ENCODE measurements at regions of chr13 and their contacts with region 1.

Region 1: GRCh38 chr13:48769107-48769704 is 115.5 kb downstream of the CYSLTR2 start:
- DNase-seq: peak; percentile 13
- H3K4me3 ChIP-seq: no peak overlapping the region
- H3K27ac ChIP-seq: no peak overlapping the region
- H3K4me1 ChIP-seq: peaks cover 0 to 3% (median 0%) of the 10 kb centered on the region in 3 donors
- H3K27me3 ChIP-seq: no peaks in the 10 kb centered on the region
- CTCF ChIP-seq: peak; percentile 92 to 100 (median 100)
- POLR2A ChIP-seq: no peak

Region 2: GRCh38 chr13:48595431-48596429 is 173.5 kb before region 1 on chr13:
- intact Hi-C with region 1: loop called (anchors 10 kb)
- DNase-seq: no peak
- H3K4me3 ChIP-seq: no peak overlapping the region
- H3K27ac ChIP-seq: no peak overlapping the region
- H3K4me1 ChIP-seq: peaks cover 0 to 16% (median 0%) of the 10 kb centered on the region in 3 donors
- H3K27me3 ChIP-seq: no peaks in the 10 kb centered on the region
- CTCF ChIP-seq: peak; percentile 17 to 74 (median 60)
- POLR2A ChIP-seq: no peak

Region 3: GRCh38 chr13:48678316-48678715 is 90.9 kb before region 1 on chr13:
- intact Hi-C with region 1: no loop called
- DNase-seq: no peak
- H3K4me3 ChIP-seq: no peak overlapping the region
- H3K27ac ChIP-seq: no peak overlapping the region
- H3K4me1 ChIP-seq: no peaks in the 10 kb centered on the region
- H3K27me3 ChIP-seq: peaks cover 0 to 5% (median 0%) of the 10 kb centered on the region in 4 donors
- CTCF ChIP-seq: no peak
- POLR2A ChIP-seq: no peak

Measured in esophagus squamous epithelium (tissue), 5 donors.